ENCODE measurements at regions of chr20 and their contacts with region 1.

Region 1: DNA sequence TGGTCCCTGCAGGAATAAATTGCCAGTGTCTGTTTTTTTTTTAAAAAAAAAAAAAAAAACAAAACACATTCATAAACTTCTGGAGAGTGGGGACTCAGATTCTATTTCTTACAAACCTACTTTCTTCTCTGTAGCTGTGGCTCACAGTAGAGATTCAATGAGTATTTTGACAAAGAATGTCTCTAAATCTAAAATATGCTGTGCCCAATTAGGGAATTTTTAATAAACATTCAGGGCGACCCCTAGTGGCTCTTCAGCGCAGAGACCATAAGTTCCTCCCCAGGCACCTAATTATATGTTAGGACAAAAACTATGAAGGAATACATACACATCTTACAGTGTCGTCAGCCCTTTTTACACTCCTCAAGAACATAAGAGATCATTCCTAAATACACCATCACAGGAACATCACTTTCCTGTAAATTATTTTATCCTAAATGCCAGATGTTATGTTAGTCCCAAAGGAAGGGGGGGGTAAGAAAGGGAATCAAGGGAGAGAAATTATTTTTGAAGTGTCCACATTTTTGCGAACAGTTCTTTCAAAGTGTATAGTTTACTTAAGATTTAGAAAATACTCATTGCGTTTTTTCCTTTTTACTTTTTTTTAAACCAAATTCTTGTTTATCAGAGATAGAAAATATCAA is 21.8 kb upstream of the NAA20 start:
- DNase-seq: peak; percentile 51
- H3K4me3 Mint-ChIP-seq: no peak overlapping the region
- H3K27ac Mint-ChIP-seq: no peak overlapping the region
- H3K4me1 Mint-ChIP-seq: no peaks in the 10 kb centered on the region
- H3K27me3 Mint-ChIP-seq: no peaks in the 10 kb centered on the region

Region 2: GRCh38 chr20:19692685-19693119 is 302.6 kb before region 1 on chr20:
- CTCF ChIA-PET with region 1: interaction called, 14 read pairs
- intact Hi-C with region 1: loop called (anchors 1 kb)
- DNase-seq: peak; percentile 64
- H3K4me3 Mint-ChIP-seq: no peak overlapping the region
- H3K27ac Mint-ChIP-seq: no peak overlapping the region
- H3K4me1 Mint-ChIP-seq: peaks cover 2% of the 10 kb centered on the region
- H3K27me3 Mint-ChIP-seq: peaks cover 26% of the 10 kb centered on the region

Region 3: GRCh38 chr20:19784511-19785172 is 210.7 kb before region 1 on chr20:
- CTCF ChIA-PET with region 1: interaction called, 14 read pairs
- intact Hi-C with region 1: loop called (anchors 1 kb)
- DNase-seq: peak; percentile 42
- H3K4me3 Mint-ChIP-seq: no peak overlapping the region
- H3K27ac Mint-ChIP-seq: no peak overlapping the region
- H3K4me1 Mint-ChIP-seq: no peaks in the 10 kb centered on the region
- H3K27me3 Mint-ChIP-seq: peaks cover 10% of the 10 kb centered on the region

Region 4: DNA sequence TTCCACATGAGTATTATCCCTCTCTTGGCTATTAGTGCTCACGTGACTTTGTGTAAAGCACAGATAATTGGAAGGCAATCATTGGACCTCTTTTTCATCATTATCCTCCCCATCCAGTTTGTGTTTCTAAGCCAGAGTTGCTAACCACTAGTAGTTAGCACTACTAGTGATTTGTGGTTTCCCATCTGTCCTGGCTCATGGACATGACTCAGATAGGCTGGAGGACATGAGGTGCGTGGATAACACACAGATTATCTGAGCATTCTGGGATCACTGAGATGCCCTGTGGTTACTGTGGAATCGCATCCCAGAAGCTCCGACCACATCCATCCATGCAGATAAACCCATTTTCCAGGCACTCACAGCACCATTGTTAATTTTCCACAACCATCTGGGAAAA is 102.0 kb before region 1 on chr20:
- CTCF ChIA-PET with region 1: no interaction called
- intact Hi-C with region 1: no loop called
- DNase-seq: no peak
- H3K4me3 Mint-ChIP-seq: no peak overlapping the region
- H3K27ac Mint-ChIP-seq: no peak overlapping the region
- H3K4me1 Mint-ChIP-seq: no peaks in the 10 kb centered on the region
- H3K27me3 Mint-ChIP-seq: peaks cover 16% of the 10 kb centered on the region

Region 5: GRCh38 chr20:19934792-19935491 is 60.4 kb before region 1 on chr20:
- CTCF ChIA-PET with region 1: interaction called, 6 read pairs
- intact Hi-C with region 1: loop called (anchors 5 kb)
- DNase-seq: peak; percentile 10
- H3K4me3 Mint-ChIP-seq: no peak overlapping the region
- H3K27ac Mint-ChIP-seq: no peak overlapping the region
- H3K4me1 Mint-ChIP-seq: peaks cover 17% of the 10 kb centered on the region
- H3K27me3 Mint-ChIP-seq: peaks cover 7% of the 10 kb centered on the region